K562 (cell line): ENCODE measurements at regions of chr20 and their contacts with region 1.

Region 1: GRCh38 chr20:44609511-44610312 is 27.3 kb downstream of the PKIG start:
- DNase-seq: peak; percentile 81 to 91 (median 84)
- ATAC-seq: peak; percentile 99
- H3K4me3 ChIP-seq: no peak overlapping the region
- H3K27ac ChIP-seq: peak overlapping the region; percentile 19; the same call in 1 of the 3 replicates
- H3K4me1 ChIP-seq: peaks cover 5 to 19% of the 10 kb centered on the region in 2 experiments; a peak in 4 of 5 replicates
- H3K27me3 ChIP-seq: no peaks in the 10 kb centered on the region
- CTCF ChIP-seq: peak; percentile 95 to 99 (median 98)
- EP300 ChIP-seq: no peak
- POLR2A ChIP-seq: no peak; the same call in 1 of the 2 replicates
- RAD21 ChIP-seq: peak; percentile 97 to 98

Region 2: GRCh38 chr20:44210422-44211176 is 399.1 kb before region 1 on chr20 and contains the start of gene OSER1:
- CTCF ChIA-PET with region 1: no interaction called
- POLR2A ChIA-PET with region 1: no interaction called
- in situ Hi-C with region 1: loop called (anchors 10 kb)
- intact Hi-C with region 1: loop called (anchors 5 kb)
- DNase-seq: peak; percentile 97 to 99 (median 99)
- ATAC-seq: peak; percentile 89
- H3K4me3 ChIP-seq: peak within 1 kb of the TSS; percentile 94
- H3K27ac ChIP-seq: peak within 1 kb of the TSS; percentile 92
- H3K4me1 ChIP-seq: peaks cover 17 to 24% of the 10 kb centered on the region in 2 experiments
- H3K27me3 ChIP-seq: no peaks in the 10 kb centered on the region
- CTCF ChIP-seq: no peak
- EP300 ChIP-seq: peak; percentile 60; the same call in 1 of the 2 replicates
- POLR2A ChIP-seq: peak; percentile 85
- RAD21 ChIP-seq: no peak
- polyA plus RNA-seq, gene OSER1: 54.8 to 57.3 TPM

Region 3: DNA sequence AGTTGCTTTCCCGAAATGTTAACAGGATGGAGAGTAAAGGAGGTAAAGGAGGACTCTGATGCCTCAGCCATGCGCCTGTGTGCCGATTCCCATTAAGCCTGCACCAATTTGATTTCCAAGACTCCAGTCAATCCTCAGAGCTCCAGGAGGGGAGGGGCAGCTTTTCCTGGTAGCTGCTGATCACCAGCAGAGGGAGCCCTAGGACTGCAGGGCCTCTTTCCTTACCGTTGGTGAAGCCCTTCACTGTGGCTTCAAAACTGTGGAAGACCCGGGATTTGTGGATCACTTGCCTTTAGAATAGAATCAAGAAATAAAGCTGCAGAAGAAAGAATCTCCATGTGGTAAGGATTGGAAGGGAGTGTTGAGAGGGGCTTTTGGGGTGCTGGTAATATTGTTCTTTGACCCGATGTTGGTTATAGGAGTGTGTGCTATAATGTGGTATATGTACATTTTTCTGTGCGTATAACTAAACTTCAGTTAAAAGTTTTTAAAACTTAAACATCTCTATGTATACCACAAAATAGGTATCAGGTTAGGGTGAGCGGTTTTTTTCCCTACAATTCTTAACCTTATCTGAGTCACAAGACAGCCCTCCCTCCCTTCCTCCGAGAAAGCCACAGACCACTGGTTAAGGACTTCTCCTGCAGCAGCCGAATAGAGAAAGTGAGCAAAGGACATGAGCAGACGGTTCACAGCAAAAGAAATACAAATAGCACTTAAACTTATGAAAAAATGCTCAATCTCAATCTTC is 392.2 kb before region 1 on chr20:
- CTCF ChIA-PET with region 1: interaction called, 9 read pairs
- POLR2A ChIA-PET with region 1: no interaction called
- in situ Hi-C with region 1: loop called (anchors 10 kb)
- intact Hi-C with region 1: loop called (anchors 5 kb)
- DNase-seq: peak; percentile 64 to 85 (median 66)
- ATAC-seq: peak; percentile 91
- H3K4me3 ChIP-seq: no peak overlapping the region
- H3K27ac ChIP-seq: no peak overlapping the region
- H3K4me1 ChIP-seq: peaks cover 4 to 11% of the 10 kb centered on the region in 2 experiments; a peak in 4 of 5 replicates
- H3K27me3 ChIP-seq: peaks cover 0 to 9% of the 10 kb centered on the region in 2 experiments; a peak in 2 of 5 replicates
- CTCF ChIP-seq: peak; percentile 91 to 98 (median 96)
- EP300 ChIP-seq: no peak
- POLR2A ChIP-seq: no peak
- RAD21 ChIP-seq: peak; percentile 94 to 96

Region 4: DNA sequence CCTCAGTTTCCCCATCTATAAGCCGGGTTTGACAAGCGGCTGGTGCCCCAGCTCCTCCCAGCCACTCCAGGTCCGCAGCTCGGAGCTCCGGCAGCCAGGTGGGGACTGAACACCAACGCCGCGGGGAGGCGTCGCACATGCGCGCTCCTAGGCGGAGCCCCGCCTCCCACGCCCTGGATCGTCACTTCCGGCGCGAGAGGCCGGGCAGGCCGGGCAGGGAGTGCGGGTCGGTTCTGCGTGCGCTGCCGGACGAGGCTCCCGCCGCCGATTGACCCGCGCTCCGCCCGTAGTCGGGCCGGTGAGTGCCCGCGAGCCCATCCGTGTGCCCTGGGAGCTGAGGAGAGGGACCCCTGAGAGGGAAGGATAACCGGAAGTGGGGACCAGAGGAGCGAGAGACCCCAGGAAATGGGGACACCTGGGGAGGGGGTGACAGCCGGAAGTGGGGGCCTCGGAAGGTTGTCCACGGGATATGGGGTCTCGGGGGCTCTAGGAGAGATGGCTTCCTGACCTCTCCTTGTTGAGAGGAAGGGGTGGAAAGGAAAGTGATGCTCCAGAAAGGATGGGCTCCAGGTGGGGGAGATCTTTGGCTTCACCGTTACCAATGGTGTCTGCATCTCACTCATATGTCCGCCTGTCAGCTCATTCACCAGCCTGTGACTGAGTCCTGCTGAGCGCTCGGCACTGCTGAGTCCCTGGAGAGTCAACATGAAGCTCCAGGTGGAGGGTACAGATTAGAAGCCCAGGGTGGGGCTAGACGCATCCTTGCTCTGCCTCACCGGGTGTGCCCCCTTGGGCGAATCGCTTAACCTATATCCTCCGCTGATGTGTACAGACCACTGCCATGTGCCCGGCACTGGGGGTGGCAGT is 133.8 kb before region 1 on chr20 and contains the start of gene TTPAL:
- CTCF ChIA-PET with region 1: interaction called, 14 read pairs
- POLR2A ChIA-PET with region 1: no interaction called
- in situ Hi-C with region 1: no loop called
- intact Hi-C with region 1: loop called (anchors 2 kb)
- DNase-seq: peak; percentile 94 to 98 (median 96)
- ATAC-seq: peak; percentile 98
- H3K4me3 ChIP-seq: peak within 1 kb of the TSS; percentile 68
- H3K27ac ChIP-seq: peak within 1 kb of the TSS; percentile 77
- H3K4me1 ChIP-seq: peaks cover 17 to 22% of the 10 kb centered on the region in 2 experiments; a peak in 4 of 5 replicates
- H3K27me3 ChIP-seq: no peaks in the 10 kb centered on the region; a peak in 1 of 5 replicates
- CTCF ChIP-seq: peak; percentile 21 to 57 (median 37); a peak in 4 of 6 replicates
- EP300 ChIP-seq: no peak
- POLR2A ChIP-seq: peak; percentile 97
- RAD21 ChIP-seq: peak; percentile 46 to 50
- polyA plus RNA-seq, gene TTPAL: 1.1 to 1.5 TPM

Region 5: DNA sequence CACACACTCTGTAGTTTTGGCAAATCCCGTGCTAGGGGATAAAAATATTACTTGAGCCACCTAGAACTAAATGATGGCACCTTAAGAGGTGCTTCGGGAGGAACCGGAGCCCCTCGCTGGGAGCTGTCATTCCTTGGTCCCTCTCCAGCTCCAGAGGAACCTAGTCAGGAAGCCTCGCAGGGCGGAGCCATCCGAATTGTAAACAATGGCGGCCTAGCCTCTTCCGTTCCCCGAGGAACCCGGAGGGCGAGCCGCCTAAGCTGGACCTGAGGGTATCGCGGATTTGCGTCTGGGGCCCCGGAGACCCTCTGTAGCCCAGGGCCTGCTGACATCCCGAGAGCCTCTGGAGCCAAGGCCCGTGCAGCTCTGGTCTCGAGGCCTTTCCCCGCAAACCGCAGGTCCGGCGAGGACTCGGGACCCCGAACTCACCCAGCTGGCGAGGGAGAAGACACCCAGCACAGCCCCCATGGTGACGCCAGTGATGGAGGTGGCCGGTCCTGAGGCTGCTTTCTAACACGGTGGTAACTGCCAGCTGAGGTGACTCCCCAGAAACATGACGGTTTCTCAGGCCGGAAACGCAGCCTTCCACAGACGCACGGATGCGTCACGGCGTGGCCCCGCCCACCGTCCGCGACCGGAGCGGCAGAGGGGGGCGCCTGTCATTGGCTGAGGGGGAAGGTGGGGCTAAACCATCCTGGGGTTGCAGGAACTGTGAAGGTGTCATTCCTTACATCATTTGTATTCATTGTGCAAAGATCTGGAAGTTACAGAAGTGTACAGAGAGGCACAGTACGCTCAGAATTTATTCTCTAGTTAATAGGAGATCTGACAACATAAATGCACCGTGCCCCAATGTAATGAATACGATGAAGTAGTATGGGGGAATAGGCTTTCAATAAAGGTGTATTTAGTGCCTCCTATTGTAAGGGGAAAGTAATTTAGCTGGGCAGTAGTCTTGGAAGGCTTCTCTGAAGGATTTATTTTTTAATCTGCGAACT is 87.9 kb before region 1 on chr20 and contains the start of gene SERINC3:
- CTCF ChIA-PET with region 1: interaction called, 4 read pairs
- POLR2A ChIA-PET with region 1: interaction called, 3 read pairs
- in situ Hi-C with region 1: no loop called
- intact Hi-C with region 1: loop called (anchors 5 kb)
- DNase-seq: peak; percentile 95 to 96 (median 96)
- ATAC-seq: peak; percentile 98
- H3K4me3 ChIP-seq: peak within 1 kb of the TSS; percentile 61
- H3K27ac ChIP-seq: peak within 1 kb of the TSS; percentile 81
- H3K4me1 ChIP-seq: peaks cover 11 to 46% of the 10 kb centered on the region in 2 experiments
- H3K27me3 ChIP-seq: no peaks in the 10 kb centered on the region
- CTCF ChIP-seq: peak in 2 of 3 experiments; percentile 33 to 41; a peak in 2 of 6 replicates
- EP300 ChIP-seq: peak; percentile 40
- POLR2A ChIP-seq: peak; percentile 87
- RAD21 ChIP-seq: no peak
- polyA plus RNA-seq, gene SERINC3: 73.1 to 93.2 TPM

Region 6: DNA sequence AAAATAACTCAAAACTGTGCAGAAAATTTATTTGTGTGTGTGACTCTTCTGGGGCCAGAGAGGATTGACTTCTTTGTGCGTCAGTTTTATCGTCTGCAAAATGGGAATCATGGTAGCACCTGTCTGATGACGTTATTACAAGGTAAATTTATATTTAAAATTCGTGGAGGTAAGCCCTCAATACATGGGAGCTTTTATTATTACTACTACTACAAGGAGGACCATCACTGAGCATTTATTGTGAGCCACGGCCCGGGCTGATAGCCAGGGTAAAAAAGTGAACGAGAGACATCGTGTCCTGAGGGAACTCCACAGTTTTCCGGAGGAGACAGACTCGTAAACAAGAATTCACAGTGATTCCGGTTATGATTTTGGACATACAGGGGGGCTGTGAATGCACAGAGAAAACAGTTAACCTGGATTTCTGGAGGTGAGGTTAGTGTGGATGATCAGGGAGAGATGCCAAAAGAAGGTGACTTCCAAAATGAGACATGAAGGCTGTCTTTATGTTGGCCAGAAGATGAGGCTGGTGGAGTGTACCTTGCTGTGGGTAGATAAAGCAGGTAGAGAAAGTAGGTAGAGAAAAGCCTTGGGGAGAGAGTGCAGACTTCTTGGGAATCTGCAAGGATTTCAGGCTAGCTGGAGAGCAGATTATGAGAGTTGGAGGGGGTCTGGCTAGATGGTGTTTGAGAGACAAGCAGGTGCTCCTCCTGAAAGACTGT is 77.3 kb before region 1 on chr20:
- CTCF ChIA-PET with region 1: interaction called, 20 read pairs
- POLR2A ChIA-PET with region 1: no interaction called
- in situ Hi-C with region 1: no loop called
- intact Hi-C with region 1: no loop called
- DNase-seq: no peak
- ATAC-seq: no peak
- H3K4me3 ChIP-seq: peak overlapping the region; percentile 55
- H3K27ac ChIP-seq: no peak overlapping the region
- H3K4me1 ChIP-seq: peaks cover 10% of the 10 kb centered on the region in 2 experiments; a peak in 4 of 5 replicates
- H3K27me3 ChIP-seq: no peaks in the 10 kb centered on the region
- CTCF ChIP-seq: no peak
- EP300 ChIP-seq: no peak
- POLR2A ChIP-seq: no peak
- RAD21 ChIP-seq: no peak

Region 7: GRCh38 chr20:44683263-44684046 is 73.7 kb after region 1 on chr20:
- CTCF ChIA-PET with region 1: no interaction called
- POLR2A ChIA-PET with region 1: no interaction called
- in situ Hi-C with region 1: no loop called
- intact Hi-C with region 1: loop called (anchors 2 kb)
- DNase-seq: peak; percentile 68 to 87 (median 80)
- ATAC-seq: peak; percentile 93
- H3K4me3 ChIP-seq: no peak overlapping the region
- H3K27ac ChIP-seq: no peak overlapping the region
- H3K4me1 ChIP-seq: peaks cover 5% of the 10 kb centered on the region in 2 experiments; a peak in 3 of 5 replicates
- H3K27me3 ChIP-seq: peaks cover 13 to 14% of the 10 kb centered on the region in 2 experiments; a peak in 4 of 5 replicates
- CTCF ChIP-seq: peak; percentile 75 to 77 (median 76)
- EP300 ChIP-seq: no peak
- POLR2A ChIP-seq: no peak
- RAD21 ChIP-seq: peak; percentile 46 to 78